ENCODE measurements at regions of chr19 and their contacts with region 1.

Region 1: DNA sequence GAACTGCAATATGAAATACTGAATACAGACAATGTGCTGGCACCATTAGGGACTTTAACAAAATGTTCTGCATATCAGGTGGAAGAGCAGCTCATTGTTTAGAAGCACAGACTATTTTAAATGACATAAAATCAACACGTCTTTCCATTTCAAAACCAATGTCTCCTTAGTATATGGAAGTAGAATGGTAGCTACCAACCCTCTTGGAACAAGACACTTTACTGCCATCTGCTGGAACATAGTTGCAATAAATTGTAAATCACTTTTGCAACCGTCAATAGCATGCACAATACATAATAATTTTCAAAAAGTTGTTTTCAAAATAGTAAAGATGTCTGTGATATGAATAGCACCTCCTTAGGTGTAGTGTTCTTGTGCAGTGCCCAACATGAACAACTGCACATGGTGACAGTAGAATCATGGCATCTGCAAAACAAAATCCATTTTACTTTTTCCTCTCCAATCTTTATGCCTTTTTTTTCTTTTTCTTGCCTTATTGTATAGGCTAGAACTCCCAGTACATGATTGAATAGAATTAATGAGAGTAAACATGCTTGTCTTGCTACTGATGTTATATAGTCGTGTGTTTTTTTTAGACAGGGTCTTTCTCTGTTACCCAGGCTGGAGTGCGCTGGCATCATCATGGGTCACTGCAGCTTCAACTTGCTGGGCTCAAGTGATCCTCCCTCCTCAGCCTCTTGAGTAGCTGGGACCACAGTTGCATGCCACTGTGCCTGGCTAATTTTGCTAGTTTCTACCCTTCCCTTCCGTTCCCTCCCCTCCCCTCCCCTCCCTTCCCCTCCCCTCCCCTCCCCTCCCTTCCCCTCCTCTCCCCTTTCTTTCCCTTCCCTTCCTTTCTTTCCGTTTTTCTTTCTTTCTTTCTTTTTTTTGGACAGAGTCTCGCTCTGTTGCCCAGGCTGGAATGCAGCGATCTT is 7.8 kb upstream of the LYPD5 start:
- DNase-seq: peak; percentile 55
- H3K4me3 ChIP-seq: no peak overlapping the region
- H3K27ac ChIP-seq: no peak overlapping the region
- H3K4me1 ChIP-seq: no peaks in the 10 kb centered on the region
- H3K27me3 ChIP-seq: peaks cover 12% of the 10 kb centered on the region; the same call in 1 of the 2 replicates
- CTCF ChIP-seq: peak; percentile 67
- EP300 ChIP-seq: no peak
- RAD21 ChIP-seq: peak; percentile 71

Region 2: GRCh38 chr19:43707158-43707712 is 102.8 kb before region 1 on chr19:
- CTCF ChIA-PET with region 1: no interaction called
- POLR2A ChIA-PET with region 1: no interaction called
- DNase-seq: no peak
- H3K4me3 ChIP-seq: no peak overlapping the region
- H3K27ac ChIP-seq: no peak overlapping the region
- H3K4me1 ChIP-seq: peaks cover 0 to 18% of the 10 kb centered on the region in 2 experiments; a peak in 2 of 4 replicates
- H3K27me3 ChIP-seq: no peaks in the 10 kb centered on the region
- CTCF ChIP-seq: no peak
- EP300 ChIP-seq: no peak
- RAD21 ChIP-seq: no peak

Region 3: GRCh38 chr19:43765109-43765876 is 44.7 kb before region 1 on chr19:
- CTCF ChIA-PET with region 1: interaction called, 11 read pairs
- POLR2A ChIA-PET with region 1: no interaction called
- DNase-seq: no peak
- H3K4me3 ChIP-seq: no peak overlapping the region
- H3K27ac ChIP-seq: peak overlapping the region; percentile 11 to 94; a peak in 3 of 4 replicates
- H3K4me1 ChIP-seq: peaks cover 0 to 21% of the 10 kb centered on the region in 2 experiments; a peak in 3 of 4 replicates
- H3K27me3 ChIP-seq: no peaks in the 10 kb centered on the region
- CTCF ChIP-seq: no peak
- EP300 ChIP-seq: peak in 1 of 2 experiments; percentile 81; a peak in 1 of 4 replicates
- RAD21 ChIP-seq: no peak

Region 4: GRCh38 chr19:43798546-43799409 is 11.3 kb before region 1 on chr19:
- CTCF ChIA-PET with region 1: interaction called, 12 read pairs
- POLR2A ChIA-PET with region 1: no interaction called
- DNase-seq: peak; percentile 65
- H3K4me3 ChIP-seq: peak overlapping the region; percentile 32 to 34
- H3K27ac ChIP-seq: no peak overlapping the region
- H3K4me1 ChIP-seq: peaks cover 0 to 7% of the 10 kb centered on the region in 2 experiments; a peak in 1 of 4 replicates
- H3K27me3 ChIP-seq: peaks cover 18% of the 10 kb centered on the region; the same call in 1 of the 2 replicates
- CTCF ChIP-seq: no peak
- EP300 ChIP-seq: no peak
- RAD21 ChIP-seq: no peak

Region 5: GRCh38 chr19:43928820-43929219 is 118.8 kb after region 1 on chr19:
- CTCF ChIA-PET with region 1: no interaction called
- POLR2A ChIA-PET with region 1: no interaction called
- DNase-seq: no peak
- H3K4me3 ChIP-seq: no peak overlapping the region
- H3K27ac ChIP-seq: no peak overlapping the region
- H3K4me1 ChIP-seq: no peaks in the 10 kb centered on the region; a peak in 3 of 4 replicates
- H3K27me3 ChIP-seq: no peaks in the 10 kb centered on the region
- CTCF ChIP-seq: no peak
- EP300 ChIP-seq: no peak
- RAD21 ChIP-seq: no peak